Activated CD4-positive, alpha-beta T cell treated with anti-CD3 and anti-CD28 coated beads for 36 hours (primary cell): ENCODE measurements at regions of chr1 and their contacts with region 1.

Region 1: DNA sequence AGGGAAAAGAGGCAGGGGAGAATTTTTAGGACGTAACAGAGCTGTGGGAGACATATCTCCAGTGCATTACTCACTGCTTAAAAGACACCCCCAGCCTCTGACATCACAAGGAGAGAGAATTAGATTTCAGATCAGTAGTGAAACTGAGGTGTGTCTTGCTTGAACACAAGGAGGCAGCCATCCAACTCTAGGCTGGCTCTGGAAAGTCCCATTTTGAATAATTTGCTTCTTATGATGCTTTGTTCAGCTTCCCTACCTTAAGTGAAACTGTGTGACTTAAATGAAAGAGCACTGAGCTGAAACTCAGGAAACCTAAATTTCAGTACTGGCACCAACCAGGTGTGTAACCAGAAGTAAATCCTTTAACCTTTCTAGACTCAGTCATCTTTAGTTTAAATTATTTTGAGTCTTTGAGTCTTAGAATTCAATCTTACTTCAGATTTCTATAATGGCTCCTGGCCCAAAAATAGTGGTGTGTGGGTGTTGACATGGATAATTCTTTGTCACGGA is 251.6 kb upstream of the SGIP1 start:
- DNase-seq: peak; percentile 82
- ATAC-seq: peak; percentile 80
- H3K4me3 Mint-ChIP-seq: peak overlapping the region; percentile 29
- H3K27ac Mint-ChIP-seq: peak overlapping the region; percentile 90
- H3K4me1 Mint-ChIP-seq: peaks cover 93% of the 10 kb centered on the region
- H3K27me3 Mint-ChIP-seq: no peaks in the 10 kb centered on the region

Region 2: GRCh38 chr1:66258404-66259105 is 23.8 kb before region 1 on chr1:
- CTCF ChIA-PET with region 1: interaction called, 13 read pairs
- POLR2A ChIA-PET with region 1: no interaction called
- intact Hi-C with region 1: loop called (anchors 1 kb)
- DNase-seq: no peak
- ATAC-seq: peak; percentile 91
- H3K4me3 Mint-ChIP-seq: no peak overlapping the region
- H3K27ac Mint-ChIP-seq: peak overlapping the region; percentile 68
- H3K4me1 Mint-ChIP-seq: peaks cover 90% of the 10 kb centered on the region
- H3K27me3 Mint-ChIP-seq: no peaks in the 10 kb centered on the region

Region 3: GRCh38 chr1:66331657-66332547 is 49.5 kb after region 1 on chr1:
- CTCF ChIA-PET with region 1: interaction called, 9 read pairs
- POLR2A ChIA-PET with region 1: interaction called, 8 read pairs
- intact Hi-C with region 1: loop called (anchors 1 kb)
- DNase-seq: peak; percentile 75
- ATAC-seq: peak; percentile 40
- H3K4me3 Mint-ChIP-seq: peak overlapping the region; percentile 91
- H3K27ac Mint-ChIP-seq: peak overlapping the region; percentile 98
- H3K4me1 Mint-ChIP-seq: peaks cover 44% of the 10 kb centered on the region
- H3K27me3 Mint-ChIP-seq: no peaks in the 10 kb centered on the region

Region 4: GRCh38 chr1:66396212-66396890 is 114.0 kb after region 1 on chr1:
- CTCF ChIA-PET with region 1: interaction called, 3 read pairs
- POLR2A ChIA-PET with region 1: no interaction called
- intact Hi-C with region 1: loop called in 1 of 2 experiments (anchors 1 kb)
- DNase-seq: peak; percentile 39
- ATAC-seq: peak; percentile 56
- H3K4me3 Mint-ChIP-seq: no peak overlapping the region
- H3K27ac Mint-ChIP-seq: no peak overlapping the region
- H3K4me1 Mint-ChIP-seq: peaks cover 39% of the 10 kb centered on the region
- H3K27me3 Mint-ChIP-seq: peaks cover 2% of the 10 kb centered on the region

Region 5: GRCh38 chr1:66426239-66426853 is 143.9 kb after region 1 on chr1:
- CTCF ChIA-PET with region 1: no interaction called
- POLR2A ChIA-PET with region 1: no interaction called
- intact Hi-C with region 1: no loop called
- DNase-seq: no peak
- ATAC-seq: peak; percentile 60
- H3K4me3 Mint-ChIP-seq: no peak overlapping the region
- H3K27ac Mint-ChIP-seq: peak overlapping the region; percentile 23
- H3K4me1 Mint-ChIP-seq: peaks cover 7% of the 10 kb centered on the region
- H3K27me3 Mint-ChIP-seq: no peaks in the 10 kb centered on the region

Region 6: GRCh38 chr1:67174716-67175284 is 892.4 kb after region 1 on chr1:
- CTCF ChIA-PET with region 1: no interaction called
- POLR2A ChIA-PET with region 1: no interaction called
- intact Hi-C with region 1: loop called in 1 of 2 experiments (anchors 10 kb)
- DNase-seq: peak; percentile 61
- ATAC-seq: peak; percentile 70
- H3K4me3 Mint-ChIP-seq: peak overlapping the region; percentile 25
- H3K27ac Mint-ChIP-seq: peak overlapping the region; percentile 94
- H3K4me1 Mint-ChIP-seq: peaks cover 68% of the 10 kb centered on the region
- H3K27me3 Mint-ChIP-seq: no peaks in the 10 kb centered on the region

Region 7: GRCh38 chr1:67339623-67340343 is 1057.4 kb after region 1 on chr1:
- CTCF ChIA-PET with region 1: no interaction called
- POLR2A ChIA-PET with region 1: no interaction called
- intact Hi-C with region 1: loop called in 1 of 2 experiments (anchors 10 kb)
- DNase-seq: peak; percentile 67
- ATAC-seq: peak; percentile 67
- H3K4me3 Mint-ChIP-seq: peak overlapping the region; percentile 40
- H3K27ac Mint-ChIP-seq: peak overlapping the region; percentile 94
- H3K4me1 Mint-ChIP-seq: peaks cover 87% of the 10 kb centered on the region
- H3K27me3 Mint-ChIP-seq: no peaks in the 10 kb centered on the region